ENCODE measurements at regions of chr4 and their contacts with region 1.

Region 1: DNA sequence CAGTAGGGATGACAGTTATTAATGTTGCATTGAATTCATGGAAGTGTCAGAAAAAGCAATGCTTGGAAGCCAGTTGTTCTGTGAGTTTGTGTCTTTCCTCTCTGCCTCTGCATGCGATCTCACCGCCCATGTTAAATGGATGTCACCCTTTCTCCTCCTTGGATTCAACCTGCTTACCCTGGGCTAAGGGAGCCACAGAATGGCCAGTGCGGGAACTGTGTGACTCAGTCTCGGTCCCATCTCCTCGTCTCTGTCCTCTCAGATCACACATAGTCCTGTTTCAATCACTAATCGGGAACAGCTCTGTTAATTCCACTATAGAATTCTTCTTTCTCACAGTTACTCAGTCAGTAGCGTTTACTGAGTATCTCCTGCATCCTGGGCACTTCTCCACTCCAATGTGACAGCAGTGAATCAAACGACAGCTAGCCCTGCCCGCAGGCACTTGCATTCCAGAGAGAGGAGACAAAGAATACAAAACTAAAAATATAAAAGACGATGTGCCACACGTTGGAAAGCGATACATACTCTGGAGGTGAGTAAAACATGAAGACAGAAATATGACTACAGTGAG is 53.7 kb upstream of the TLR3 start:
- DNase-seq: peak; percentile 13
- H3K4me3 Mint-ChIP-seq: no peak overlapping the region
- H3K27ac Mint-ChIP-seq: no peak overlapping the region
- H3K4me1 Mint-ChIP-seq: no peaks in the 10 kb centered on the region
- H3K27me3 Mint-ChIP-seq: no peaks in the 10 kb centered on the region
- CTCF ChIP-seq: no peak

Region 2: DNA sequence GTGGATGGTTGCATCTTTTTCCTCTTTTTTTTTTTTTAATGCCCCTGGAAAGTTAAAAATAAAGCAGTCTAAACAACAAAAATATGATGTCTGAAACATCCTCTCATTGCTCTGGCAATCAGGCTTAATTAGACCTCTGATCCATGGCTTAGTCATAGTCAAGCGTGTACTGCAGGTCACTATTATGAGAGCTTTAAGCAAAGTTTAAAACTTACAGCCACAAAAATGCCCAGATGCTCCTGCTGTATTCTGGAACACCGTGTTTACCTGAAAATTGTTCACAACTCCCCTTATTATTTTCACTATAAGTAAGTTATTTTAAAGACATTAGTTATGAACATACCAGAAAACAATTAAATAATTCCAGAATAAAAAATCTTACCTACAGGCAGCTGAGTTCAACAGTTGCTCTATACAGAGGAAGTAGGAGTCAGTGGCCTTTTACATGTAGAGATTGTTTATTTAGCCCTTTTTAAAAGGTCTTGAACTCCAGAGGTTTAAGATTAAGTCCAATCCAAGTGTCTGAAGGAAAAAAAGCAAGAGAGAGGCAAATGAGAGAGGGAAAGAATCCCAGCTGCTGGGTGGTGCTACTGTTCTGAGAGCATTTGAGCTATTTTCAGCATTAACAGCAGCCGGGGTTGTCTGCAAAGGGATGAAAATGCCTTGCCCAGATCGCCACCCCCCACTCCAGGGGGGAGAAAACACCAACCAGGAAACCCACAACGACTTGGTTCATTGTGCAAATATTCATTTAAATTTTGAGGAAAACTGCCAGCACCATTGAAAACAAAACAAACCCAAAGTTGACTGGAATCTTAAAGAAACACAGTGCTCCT is 240.2 kb before region 1 on chr4:
- CTCF ChIA-PET with region 1: no interaction called
- POLR2A ChIA-PET with region 1: interaction called, 3 read pairs
- intact Hi-C with region 1: loop called (anchors 5 kb)
- DNase-seq: peak; percentile 70
- H3K4me3 Mint-ChIP-seq: peak overlapping the region; percentile 60
- H3K27ac Mint-ChIP-seq: peak overlapping the region; percentile 92
- H3K4me1 Mint-ChIP-seq: peaks cover 41% of the 10 kb centered on the region
- H3K27me3 Mint-ChIP-seq: no peaks in the 10 kb centered on the region
- CTCF ChIP-seq: no peak

Measured in MCF 10A (cell line).